PC-3 (cell line): ENCODE measurements at regions of chr4 and their contacts with region 1.

Region 1: DNA sequence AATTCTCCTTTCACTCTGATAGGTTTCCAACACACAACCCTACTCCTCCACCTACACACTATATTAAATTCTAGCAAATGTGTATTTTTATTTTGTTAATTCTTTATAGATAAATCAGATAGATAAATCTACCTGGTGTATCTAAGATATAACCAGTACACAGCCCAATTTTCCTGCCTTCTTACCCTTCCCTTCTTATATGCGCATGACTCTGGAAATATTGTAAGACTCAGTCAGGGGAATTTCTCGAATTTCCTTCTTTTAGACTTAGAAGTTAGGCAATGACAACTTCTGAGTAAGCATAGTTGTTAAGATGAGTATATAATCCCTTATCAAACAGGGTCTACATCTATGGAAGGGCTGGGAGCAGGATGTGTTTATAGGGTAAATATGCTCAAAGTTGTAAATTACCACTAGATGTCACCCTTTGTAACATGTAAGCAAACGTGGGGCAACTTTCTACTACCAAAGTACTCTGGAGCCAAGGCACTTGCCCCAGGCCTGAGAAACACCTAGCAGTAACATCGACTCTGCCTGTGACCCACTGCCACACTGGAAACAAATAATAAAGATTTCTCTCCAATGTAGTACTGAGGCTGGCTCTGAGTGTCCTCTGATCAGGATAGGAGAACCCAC is 444.7 kb downstream of the IQCM start:
- DNase-seq: peak; percentile 65
- ATAC-seq: peak; percentile 77
- H3K4me3 ChIP-seq: no peak overlapping the region
- H3K27ac ChIP-seq: no peak overlapping the region
- H3K4me1 ChIP-seq: no peaks in the 10 kb centered on the region
- H3K27me3 ChIP-seq: no peaks in the 10 kb centered on the region
- CTCF ChIP-seq: peak; percentile 62

Region 2: GRCh38 chr4:148674876-148675275 is 696.0 kb before region 1 on chr4:
- CTCF ChIA-PET with region 1: no interaction called
- POLR2A ChIA-PET with region 1: no interaction called
- intact Hi-C with region 1: no loop called
- DNase-seq: peak; percentile 56
- ATAC-seq: peak; percentile 81
- H3K4me3 ChIP-seq: no peak overlapping the region
- H3K27ac ChIP-seq: 0 out of 2 replicates have a peak overlapping the region, but pooled peaks have one; percentile 43
- H3K4me1 ChIP-seq: no peaks in the 10 kb centered on the region
- H3K27me3 ChIP-seq: no peaks in the 10 kb centered on the region
- CTCF ChIP-seq: no peak

Region 3: GRCh38 chr4:149549911-149550310 is 179.0 kb after region 1 on chr4:
- CTCF ChIA-PET with region 1: no interaction called
- POLR2A ChIA-PET with region 1: no interaction called
- intact Hi-C with region 1: loop called (anchors 1 kb)
- DNase-seq: peak; percentile 22
- ATAC-seq: no peak
- H3K4me3 ChIP-seq: no peak overlapping the region
- H3K27ac ChIP-seq: no peak overlapping the region
- H3K4me1 ChIP-seq: no peaks in the 10 kb centered on the region
- H3K27me3 ChIP-seq: no peaks in the 10 kb centered on the region
- CTCF ChIP-seq: 0 out of 2 replicates have a peak, but pooled peaks have one; percentile 19

Region 4: GRCh38 chr4:149735796-149736195 is 364.9 kb after region 1 on chr4:
- CTCF ChIA-PET with region 1: no interaction called
- POLR2A ChIA-PET with region 1: no interaction called
- intact Hi-C with region 1: loop called (anchors 5 kb)
- DNase-seq: peak; percentile 14
- ATAC-seq: no peak
- H3K4me3 ChIP-seq: no peak overlapping the region
- H3K27ac ChIP-seq: no peak overlapping the region
- H3K4me1 ChIP-seq: no peaks in the 10 kb centered on the region
- H3K27me3 ChIP-seq: no peaks in the 10 kb centered on the region
- CTCF ChIP-seq: peak; percentile 32